CD8-positive, alpha-beta T cell (primary cell): ENCODE measurements at regions of chrX and their contacts with region 1.

Region 1: DNA sequence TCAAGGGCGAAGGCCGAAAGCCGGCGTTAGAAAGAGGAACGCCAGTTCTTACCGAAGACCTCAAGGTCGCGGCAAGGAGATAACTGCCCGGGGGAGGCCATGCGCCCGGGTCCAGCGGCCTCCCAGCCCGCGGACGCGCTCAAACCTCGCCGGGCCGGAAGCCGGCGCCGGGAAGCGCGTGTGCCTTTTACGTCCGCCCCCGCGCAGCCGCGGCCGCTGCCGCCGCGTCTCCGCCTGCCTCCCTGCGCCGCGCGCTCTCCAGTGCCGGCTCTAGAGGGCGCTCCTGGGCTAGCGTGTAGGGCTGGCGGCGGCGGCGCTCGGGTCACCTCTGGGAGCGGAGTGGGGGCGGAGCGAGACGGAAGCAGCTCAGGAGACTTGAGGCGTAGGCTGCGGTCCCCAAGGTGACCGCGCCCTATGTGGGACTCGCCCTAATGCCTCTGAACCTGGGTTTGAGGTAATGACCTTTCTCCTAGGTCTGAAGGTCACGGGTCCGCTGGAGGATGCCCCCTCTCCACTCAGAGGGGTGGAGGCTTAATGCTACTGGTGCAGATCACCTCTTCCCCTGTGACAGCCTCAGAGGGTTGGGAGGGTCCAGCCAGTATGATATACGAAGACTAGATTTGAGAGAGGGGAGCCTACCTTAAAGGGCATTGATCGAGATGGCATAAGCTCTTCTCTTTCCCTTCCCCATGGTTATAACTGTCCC is 839 bp downstream of the SLC25A5 start:
- DNase-seq: peak; percentile 73 to 92 (median 87)
- ATAC-seq: peak; percentile 76
- H3K4me3 ChIP-seq: peak overlapping the region; percentile 86 to 91
- H3K4me3 Mint-ChIP-seq: peak overlapping the region; percentile 87
- H3K27ac ChIP-seq: peak overlapping the region; percentile 88 to 96
- H3K27ac Mint-ChIP-seq: peak overlapping the region; percentile 89
- H3K4me1 ChIP-seq: peaks cover 15% of the 10 kb centered on the region
- H3K4me1 Mint-ChIP-seq: peaks cover 11% of the 10 kb centered on the region
- H3K27me3 ChIP-seq: no peaks in the 10 kb centered on the region
- H3K27me3 Mint-ChIP-seq: no peaks in the 10 kb centered on the region
- CTCF ChIP-seq: peak; percentile 57

Region 2: DNA sequence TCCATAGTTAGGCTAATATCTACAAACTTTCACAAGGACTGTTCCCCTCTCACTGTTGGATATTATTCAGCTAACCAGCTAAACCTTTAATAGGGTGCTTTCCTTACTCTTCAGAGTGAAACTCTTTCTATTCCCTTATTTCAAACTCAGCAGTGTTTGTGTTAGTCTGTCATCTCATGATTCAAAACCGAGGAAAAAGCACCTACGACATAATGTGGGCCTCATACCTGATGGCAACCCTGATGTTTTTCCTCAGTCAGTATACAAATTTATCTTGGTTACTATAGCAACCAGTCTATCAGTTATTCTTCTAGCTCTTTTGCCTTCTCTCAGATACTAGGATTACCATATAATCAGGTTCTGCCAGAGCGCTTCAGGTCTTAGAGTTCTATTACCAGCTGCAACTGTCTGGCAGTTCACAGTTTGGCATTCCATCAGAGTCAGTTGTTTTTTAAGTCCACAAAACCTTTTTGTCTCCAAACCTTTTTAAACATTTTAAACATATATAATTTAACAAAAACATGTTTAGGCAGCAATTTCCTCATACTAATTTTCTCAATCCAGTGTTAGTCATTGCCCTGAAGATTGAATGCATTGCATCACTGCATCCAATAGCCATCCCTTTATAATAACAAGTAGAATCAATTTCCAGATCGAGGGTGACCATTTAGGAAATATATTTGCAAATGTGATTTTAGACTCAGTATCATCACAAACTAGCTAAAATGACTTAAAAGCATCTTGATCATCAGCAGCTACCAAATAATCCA is 1115.8 kb before region 1 on chrX:
- CTCF ChIA-PET with region 1: no interaction called
- POLR2A ChIA-PET with region 1: no interaction called
- intact Hi-C with region 1: loop called (anchors 5 to 10 kb)
- DNase-seq: peak in 2 of 9 experiments; percentile 43 to 55
- ATAC-seq: peak; percentile 46
- H3K4me3 ChIP-seq: no peak overlapping the region
- H3K4me3 Mint-ChIP-seq: no peak overlapping the region
- H3K27ac ChIP-seq: no peak overlapping the region
- H3K27ac Mint-ChIP-seq: peak overlapping the region; percentile 52
- H3K4me1 ChIP-seq: peaks cover 46% of the 10 kb centered on the region
- H3K4me1 Mint-ChIP-seq: peaks cover 54% of the 10 kb centered on the region
- H3K27me3 ChIP-seq: no peaks in the 10 kb centered on the region
- H3K27me3 Mint-ChIP-seq: no peaks in the 10 kb centered on the region
- CTCF ChIP-seq: no peak

Region 3: GRCh38 chrX:119453202-119453601 is 15.9 kb before region 1 on chrX:
- CTCF ChIA-PET with region 1: no interaction called
- POLR2A ChIA-PET with region 1: no interaction called
- intact Hi-C with region 1: no loop called
- DNase-seq: no peak
- ATAC-seq: no peak
- H3K4me3 ChIP-seq: no peak overlapping the region
- H3K4me3 Mint-ChIP-seq: no peak overlapping the region
- H3K27ac ChIP-seq: no peak overlapping the region
- H3K27ac Mint-ChIP-seq: no peak overlapping the region
- H3K4me1 ChIP-seq: no peaks in the 10 kb centered on the region
- H3K4me1 Mint-ChIP-seq: no peaks in the 10 kb centered on the region
- H3K27me3 ChIP-seq: no peaks in the 10 kb centered on the region
- H3K27me3 Mint-ChIP-seq: no peaks in the 10 kb centered on the region
- CTCF ChIP-seq: no peak

Region 4: GRCh38 chrX:119482481-119483480 is 13.7 kb after region 1 on chrX:
- CTCF ChIA-PET with region 1: interaction called, 39 read pairs
- POLR2A ChIA-PET with region 1: interaction called, 8 read pairs
- intact Hi-C with region 1: loop called in 1 of 2 experiments (anchors 1 kb)
- DNase-seq: peak; percentile 24 to 77 (median 59)
- ATAC-seq: peak; percentile 88
- H3K4me3 ChIP-seq: peak overlapping the region; percentile 17 to 52
- H3K4me3 Mint-ChIP-seq: peak overlapping the region; percentile 83
- H3K27ac ChIP-seq: peak overlapping the region in 1 of 2 experiments; percentile 14
- H3K27ac Mint-ChIP-seq: peak overlapping the region; percentile 45
- H3K4me1 ChIP-seq: peaks cover 5% of the 10 kb centered on the region
- H3K4me1 Mint-ChIP-seq: peaks cover 10% of the 10 kb centered on the region
- H3K27me3 ChIP-seq: no peaks in the 10 kb centered on the region
- H3K27me3 Mint-ChIP-seq: no peaks in the 10 kb centered on the region
- CTCF ChIP-seq: peak; percentile 61

Region 5: GRCh38 chrX:119606280-119607015 is 137.4 kb after region 1 on chrX and contains the start of gene NKRF:
- CTCF ChIA-PET with region 1: no interaction called
- POLR2A ChIA-PET with region 1: no interaction called
- intact Hi-C with region 1: loop called in 1 of 2 experiments (anchors 2 kb)
- DNase-seq: peak; percentile 79 to 96 (median 88)
- ATAC-seq: peak; percentile 76
- H3K4me3 ChIP-seq: peak within 1 kb of the TSS; percentile 89 to 90
- H3K4me3 Mint-ChIP-seq: peak within 1 kb of the TSS; percentile 87
- H3K27ac ChIP-seq: peak within 1 kb of the TSS; percentile 94 to 96
- H3K27ac Mint-ChIP-seq: peak within 1 kb of the TSS; percentile 97
- H3K4me1 ChIP-seq: peaks cover 7% of the 10 kb centered on the region
- H3K4me1 Mint-ChIP-seq: peaks cover 39% of the 10 kb centered on the region
- H3K27me3 ChIP-seq: no peaks in the 10 kb centered on the region
- H3K27me3 Mint-ChIP-seq: no peaks in the 10 kb centered on the region
- CTCF ChIP-seq: no peak
- total RNA-seq, gene NKRF: 18.3 to 20.5 TPM

Region 6: DNA sequence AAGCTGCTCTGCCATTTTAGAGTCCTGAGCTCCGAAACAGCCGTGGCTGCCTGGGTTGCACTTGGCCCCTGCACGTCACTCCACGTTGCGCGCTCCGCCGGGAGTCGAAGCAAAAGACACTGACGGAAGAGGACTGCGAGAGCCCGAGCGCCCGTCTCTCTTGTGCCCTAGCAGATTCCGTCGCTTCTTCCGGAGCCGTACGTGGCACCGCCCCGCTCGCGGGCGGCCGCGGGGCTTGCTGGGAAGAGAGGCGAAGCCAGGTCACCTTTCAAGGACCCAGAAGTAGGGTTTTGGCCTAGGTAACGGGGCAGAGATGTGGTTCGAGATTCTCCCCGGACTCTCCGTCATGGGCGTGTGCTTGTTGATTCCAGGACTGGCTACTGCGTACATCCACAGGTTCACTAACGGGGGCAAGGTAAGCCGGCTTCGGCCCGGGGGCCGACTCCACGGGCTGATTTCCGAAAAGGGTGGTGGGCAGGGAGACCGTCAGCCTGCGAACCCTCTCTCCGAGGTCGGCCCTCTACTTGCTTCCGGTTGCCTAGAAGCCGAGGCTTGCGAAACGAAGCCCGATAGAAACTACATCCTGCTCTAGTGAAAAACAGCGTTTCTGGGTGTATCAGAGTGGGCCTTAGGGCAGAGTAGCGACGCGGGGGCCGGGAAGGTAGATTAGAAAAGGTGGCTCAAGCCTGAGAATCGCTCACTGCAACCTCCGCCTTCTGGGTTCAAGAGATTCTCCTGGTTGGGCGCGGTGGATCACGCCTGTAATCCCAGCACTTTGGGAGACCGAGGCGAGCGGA is 402.7 kb after region 1 on chrX and contains the starts of genes NDUFA1 and RNF113A:
- CTCF ChIA-PET with region 1: no interaction called
- POLR2A ChIA-PET with region 1: no interaction called
- intact Hi-C with region 1: loop called in 1 of 2 experiments (anchors 2 kb)
- DNase-seq: peak; percentile 69 to 94 (median 81)
- ATAC-seq: peak; percentile 87
- H3K4me3 ChIP-seq: peak within 1 kb of the TSS; percentile 77 to 80
- H3K4me3 Mint-ChIP-seq: peak within 1 kb of the TSS; percentile 97
- H3K27ac ChIP-seq: peak within 1 kb of the TSS; percentile 95 to 97
- H3K27ac Mint-ChIP-seq: peak within 1 kb of the TSS; percentile 99
- H3K4me1 ChIP-seq: peaks cover 7% of the 10 kb centered on the region
- H3K4me1 Mint-ChIP-seq: peaks cover 27% of the 10 kb centered on the region
- H3K27me3 ChIP-seq: no peaks in the 10 kb centered on the region
- H3K27me3 Mint-ChIP-seq: no peaks in the 10 kb centered on the region
- CTCF ChIP-seq: no peak
- total RNA-seq, gene NDUFA1: 48.3 to 51.0 TPM
- total RNA-seq, gene RNF113A: 27.8 to 29.4 TPM

Region 7: DNA sequence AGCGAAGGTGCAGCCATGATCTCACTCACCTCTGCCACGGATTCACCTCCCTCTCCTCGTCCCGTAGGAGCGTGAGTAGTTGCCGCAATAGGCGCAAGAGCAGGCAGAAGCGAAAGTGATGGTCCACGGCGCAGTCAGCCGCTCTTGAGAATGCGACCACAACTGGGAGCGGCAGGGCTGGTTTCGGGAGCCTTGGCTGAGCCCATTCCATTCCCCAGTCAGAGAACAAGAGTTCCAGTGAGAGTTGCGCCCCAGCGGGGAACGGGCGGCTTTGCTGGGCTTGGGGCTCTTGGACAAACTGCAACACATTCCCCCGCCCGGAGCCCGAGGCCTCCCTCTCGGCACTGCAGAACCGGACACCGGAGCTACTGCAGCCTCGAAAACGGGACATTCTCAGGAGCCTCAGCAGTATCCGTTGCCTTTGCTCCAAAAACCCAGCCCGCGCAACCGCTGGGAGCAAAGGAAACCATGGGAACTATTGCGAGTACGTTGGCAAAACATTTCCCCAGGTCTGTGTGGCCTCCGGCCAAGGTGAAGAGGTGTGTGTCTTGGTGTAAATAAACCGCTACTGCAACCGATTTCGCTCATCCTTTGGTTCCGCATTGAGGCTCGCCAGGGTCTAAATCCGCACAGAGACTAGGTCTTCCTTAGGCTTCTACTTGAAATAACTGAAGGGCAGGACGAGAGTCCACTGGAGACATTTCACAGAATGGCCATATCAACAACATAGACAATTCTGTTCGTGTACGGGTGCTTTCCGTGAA is 775.8 kb after region 1 on chrX:
- CTCF ChIA-PET with region 1: no interaction called
- POLR2A ChIA-PET with region 1: no interaction called
- intact Hi-C with region 1: loop called in 1 of 2 experiments (anchors 5 kb)
- DNase-seq: peak; percentile 28 to 77 (median 59)
- ATAC-seq: peak; percentile 88
- H3K4me3 ChIP-seq: peak overlapping the region; percentile 87 to 90
- H3K4me3 Mint-ChIP-seq: peak overlapping the region; percentile 98
- H3K27ac ChIP-seq: peak overlapping the region; percentile 73 to 90
- H3K27ac Mint-ChIP-seq: peak overlapping the region; percentile 93
- H3K4me1 ChIP-seq: peaks cover 15% of the 10 kb centered on the region
- H3K4me1 Mint-ChIP-seq: peaks cover 26% of the 10 kb centered on the region
- H3K27me3 ChIP-seq: no peaks in the 10 kb centered on the region
- H3K27me3 Mint-ChIP-seq: peaks cover 2% of the 10 kb centered on the region
- CTCF ChIP-seq: no peak